ENCODE measurements at regions of chr14 and their contacts with region 1.

Region 1: DNA sequence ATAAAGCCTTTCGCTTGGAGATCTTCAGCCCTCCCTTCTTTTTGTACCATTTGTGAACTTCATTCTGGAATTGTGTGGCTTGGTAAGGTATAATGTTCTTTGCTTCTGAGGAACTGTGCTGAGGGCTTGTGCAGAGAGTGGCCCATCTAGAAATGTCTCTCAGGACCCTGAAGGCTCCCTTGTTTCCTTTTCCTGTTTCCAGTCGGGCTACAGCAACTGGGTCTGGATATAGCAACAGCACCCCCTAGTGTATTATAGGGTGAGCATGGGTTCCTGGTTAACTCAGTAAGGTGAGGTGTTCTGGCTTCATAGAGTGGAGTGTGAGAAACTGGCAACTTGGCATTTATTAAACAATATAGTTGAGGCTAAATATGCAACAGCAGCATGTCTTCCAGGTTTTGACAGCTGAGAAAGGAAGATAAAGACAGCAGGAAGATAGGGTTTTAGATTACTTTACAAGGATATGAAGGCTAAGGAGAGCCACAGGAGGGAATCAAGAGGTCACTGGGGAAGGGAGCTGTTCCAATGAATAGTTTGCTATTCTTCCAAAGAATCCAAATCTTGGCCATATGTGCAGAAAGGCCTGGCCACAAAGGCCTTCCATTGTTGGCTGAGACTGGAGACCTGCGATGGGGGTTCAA is 49.1 kb upstream of the RNU6-8 start:
- DNase-seq: no peak

Region 2: DNA sequence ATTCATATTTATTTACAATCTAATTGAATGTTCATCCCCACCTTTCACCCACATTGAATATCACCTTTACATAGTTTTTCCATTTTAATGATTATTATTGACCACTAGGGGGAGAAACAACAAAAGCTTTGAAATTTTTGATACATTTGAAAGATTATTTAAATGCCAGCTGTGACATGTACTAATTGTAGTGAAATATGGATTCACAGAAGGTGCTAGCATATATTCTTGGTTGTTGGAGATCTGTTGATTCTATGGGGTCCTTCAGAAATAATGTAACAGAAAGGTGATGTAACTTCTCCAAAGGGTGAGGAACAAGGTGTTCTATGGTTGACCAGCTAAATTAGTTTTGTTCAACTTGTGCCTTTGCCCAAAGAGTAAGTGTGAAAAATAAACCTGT is 741.9 kb before region 1 on chr14:
- intact Hi-C with region 1: loop called (anchors 2 kb)
- DNase-seq: no peak

Region 3: DNA sequence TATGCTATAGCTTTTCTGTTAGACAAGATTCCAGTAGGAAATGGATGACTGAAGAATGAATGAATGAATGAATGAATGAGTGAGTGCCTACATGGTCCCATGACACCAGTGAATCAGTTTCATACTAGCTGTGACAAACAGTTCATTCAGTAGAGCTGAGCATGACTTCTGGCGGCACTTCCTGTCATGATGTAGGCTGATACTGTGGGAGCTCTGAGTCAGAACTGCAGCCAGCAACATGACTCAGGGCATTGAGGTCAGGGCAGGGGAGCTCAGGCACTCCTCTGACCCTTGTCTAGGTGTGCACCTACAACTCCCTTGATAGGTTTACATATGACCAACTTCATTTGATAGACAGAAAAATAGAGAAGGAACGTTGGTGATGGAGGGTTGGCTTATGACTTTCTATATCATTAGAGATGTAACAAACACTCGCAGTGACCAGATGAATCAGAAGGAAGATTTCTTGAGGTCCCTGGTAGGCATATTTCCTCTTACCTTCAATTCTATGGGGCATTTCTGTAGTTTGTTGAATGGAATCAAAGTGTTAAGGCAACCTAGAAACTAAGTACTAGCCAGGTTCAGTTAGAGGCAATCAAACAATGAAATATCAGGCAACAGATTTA is 314.3 kb before region 1 on chr14:
- intact Hi-C with region 1: loop called (anchors 2 kb)
- DNase-seq: no peak

Region 4: DNA sequence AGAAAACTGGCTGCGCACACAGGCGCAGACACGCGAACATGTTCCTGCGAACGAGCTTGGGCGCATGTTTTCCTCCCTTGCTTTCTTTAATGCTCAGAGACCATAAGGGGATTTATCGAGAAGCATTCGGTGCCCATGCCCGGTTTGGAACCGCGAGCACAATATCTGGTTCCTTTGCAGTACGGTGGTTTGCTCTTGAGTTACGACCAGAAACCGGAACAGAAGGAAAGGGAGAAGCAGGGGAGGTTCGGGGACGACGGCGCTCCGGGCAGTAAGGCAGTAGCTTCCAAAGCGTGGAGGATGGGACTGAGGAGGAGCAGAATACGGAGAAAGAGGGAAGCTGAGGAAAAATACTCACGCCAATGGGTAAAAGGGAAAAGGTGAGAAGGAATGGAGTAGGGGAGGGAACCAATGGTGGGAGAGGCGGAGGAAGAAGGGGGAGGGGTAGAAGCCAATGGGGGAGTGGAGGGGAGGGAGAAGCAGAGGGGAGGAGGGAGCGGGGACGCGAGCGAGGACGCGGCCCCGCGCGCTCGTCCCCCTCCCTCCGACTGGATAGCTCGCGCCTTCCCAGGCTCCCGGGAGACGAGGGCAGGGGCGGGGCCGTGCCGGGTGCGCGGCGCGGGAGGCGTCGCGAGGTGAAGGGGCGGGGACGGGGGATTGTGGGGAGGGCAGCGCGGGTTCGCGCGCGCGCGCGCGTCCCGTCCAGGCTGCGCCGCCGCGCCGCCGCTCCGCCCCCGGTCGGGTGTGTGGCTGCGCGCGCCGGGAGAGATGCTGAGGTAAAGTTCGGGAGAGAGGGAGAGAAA is 175.7 kb before region 1 on chr14:
- intact Hi-C with region 1: loop called (anchors 2 kb)
- DNase-seq: peak; percentile 96

Region 5: GRCh38 chr14:32202998-32203882 is 48.9 kb before region 1 on chr14 and contains the start of gene RNU6-8:
- intact Hi-C with region 1: loop called (anchors 5 kb)
- DNase-seq: peak; percentile 92
- total RNA-seq, gene RNU6-8: not detected

Region 6: GRCh38 chr14:32469388-32470160 is 217.4 kb after region 1 on chr14:
- intact Hi-C with region 1: loop called (anchors 2 kb)
- DNase-seq: no peak

Region 7: DNA sequence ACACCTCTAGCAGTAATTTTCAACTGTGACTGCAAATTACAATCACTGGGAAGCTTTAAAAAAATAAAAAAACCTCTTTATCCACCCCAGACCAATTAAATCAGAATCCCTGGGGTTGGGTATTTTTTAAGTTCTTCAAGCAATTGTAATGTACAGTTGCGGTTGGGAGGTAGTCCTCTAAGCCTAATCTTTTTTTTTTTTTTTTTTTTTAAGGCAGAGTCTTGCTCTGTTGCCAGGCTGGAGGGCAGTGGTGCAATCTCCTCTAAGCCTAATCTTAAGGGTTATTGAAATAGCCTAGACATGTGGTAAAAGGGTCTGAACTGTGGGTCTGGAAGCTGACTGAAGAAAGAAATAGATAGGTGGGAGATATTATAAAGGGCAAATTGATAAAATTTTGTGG is 307.4 kb after region 1 on chr14:
- intact Hi-C with region 1: loop called (anchors 5 kb)
- DNase-seq: no peak

Measured in cardiac septum (tissue), 1 donor.